ENCODE measurements at regions of chr16 and their contacts with region 1.

Region 1: GRCh38 chr16:87416826-87417527 is 24.8 kb downstream of the MAP1LC3B start:
- DNase-seq: peak; percentile 43
- H3K4me3 ChIP-seq: no peak overlapping the region
- H3K27ac ChIP-seq: no peak overlapping the region
- H3K4me1 ChIP-seq: no peaks in the 10 kb centered on the region
- H3K27me3 ChIP-seq: no peaks in the 10 kb centered on the region
- CTCF ChIP-seq: peak; percentile 64

Region 2: GRCh38 chr16:86994651-86995171 is 422.3 kb before region 1 on chr16:
- intact Hi-C with region 1: no loop called
- DNase-seq: no peak
- H3K4me3 ChIP-seq: no peak overlapping the region
- H3K27ac ChIP-seq: no peak overlapping the region
- H3K4me1 ChIP-seq: no peaks in the 10 kb centered on the region
- H3K27me3 ChIP-seq: no peaks in the 10 kb centered on the region
- CTCF ChIP-seq: no peak

Region 3: GRCh38 chr16:87447323-87447722 is 30.3 kb after region 1 on chr16:
- intact Hi-C with region 1: no loop called
- DNase-seq: no peak
- H3K4me3 ChIP-seq: no peak overlapping the region
- H3K27ac ChIP-seq: peak overlapping the region; percentile 34
- H3K4me1 ChIP-seq: no peaks in the 10 kb centered on the region
- H3K27me3 ChIP-seq: no peaks in the 10 kb centered on the region
- CTCF ChIP-seq: no peak

Region 4: DNA sequence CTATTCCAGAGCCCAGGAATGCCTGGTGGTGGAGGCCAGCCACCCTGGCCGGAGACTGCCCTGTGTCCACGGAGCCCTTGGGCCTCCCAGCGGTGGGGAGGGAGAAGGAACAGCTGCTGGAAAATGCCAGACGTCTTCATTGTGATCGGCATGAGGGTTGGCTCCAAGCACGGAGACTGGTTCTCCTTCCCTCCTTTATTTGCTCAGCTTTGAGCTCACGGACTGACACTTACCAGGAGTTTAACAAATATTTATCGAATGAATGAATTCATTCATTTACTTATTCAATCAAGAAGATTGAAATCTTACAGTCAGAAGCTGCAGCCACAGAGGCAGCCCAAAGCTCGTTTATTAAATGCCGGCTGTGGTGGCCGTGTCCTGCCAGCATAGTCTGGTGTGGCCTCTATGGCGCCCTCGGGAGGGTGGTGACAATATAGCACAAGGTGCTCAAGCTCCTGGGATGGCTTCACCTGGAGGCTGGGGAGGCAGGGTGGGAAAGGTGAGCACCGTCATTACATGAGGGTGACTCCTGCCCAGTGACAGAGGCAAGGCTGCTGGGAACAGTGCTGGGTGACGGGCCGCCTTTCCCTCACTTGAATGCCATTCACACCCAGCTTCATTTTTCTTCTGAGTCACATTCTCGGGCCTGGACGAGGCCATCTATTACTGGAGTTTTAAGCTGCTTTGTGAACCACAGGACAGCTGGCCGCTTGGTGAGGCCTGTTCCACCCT is 154.3 kb after region 1 on chr16:
- intact Hi-C with region 1: loop called (anchors 5 kb)
- DNase-seq: peak; percentile 41
- H3K4me3 ChIP-seq: no peak overlapping the region
- H3K27ac ChIP-seq: no peak overlapping the region
- H3K4me1 ChIP-seq: no peaks in the 10 kb centered on the region
- H3K27me3 ChIP-seq: peaks cover 5% of the 10 kb centered on the region
- CTCF ChIP-seq: no peak

Measured in colonic mucosa (tissue), 4 donors.